Heart left ventricle (tissue), 16 donors: ENCODE measurements at regions of chr1 and their contacts with region 1.

Region 1: DNA sequence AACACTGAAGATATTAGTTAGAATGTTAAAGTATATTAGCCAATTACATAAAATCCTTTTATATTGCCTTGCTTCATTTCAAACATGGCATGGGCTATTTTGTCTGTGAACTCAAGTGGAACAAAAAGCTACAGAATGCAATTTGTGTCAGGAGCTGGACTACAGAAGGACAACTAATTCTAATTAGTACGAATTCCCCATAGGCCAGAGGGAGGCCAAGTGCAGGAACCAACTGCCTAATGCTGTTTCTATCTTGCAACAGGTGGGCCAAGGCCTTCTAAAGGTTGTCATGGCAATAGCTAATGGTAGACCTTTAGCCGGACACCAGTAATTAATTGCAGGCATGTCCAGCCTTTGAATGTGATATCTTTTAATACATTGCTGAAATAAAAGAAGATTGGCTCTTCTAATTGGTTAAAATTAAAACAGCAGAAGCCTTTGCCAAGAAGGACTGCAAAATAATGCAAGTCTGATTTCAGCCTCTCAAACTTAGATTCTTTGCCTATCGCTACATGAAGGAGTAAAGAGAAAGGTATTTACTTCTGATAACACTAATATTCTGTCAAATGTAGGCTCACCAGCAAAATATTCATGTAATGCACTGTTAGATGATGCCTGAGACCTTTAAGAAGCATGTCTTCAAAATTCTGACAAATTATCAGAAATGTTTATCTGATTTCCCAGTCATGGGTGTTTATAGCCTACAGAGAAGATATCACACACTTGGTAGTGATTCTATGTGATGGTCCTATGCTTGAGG is 232.1 kb downstream of the LMO4 start:
- DNase-seq: no peak
- ATAC-seq: no peak
- H3K4me3 ChIP-seq: no peak overlapping the region
- H3K27ac ChIP-seq: no peak overlapping the region
- H3K4me1 ChIP-seq: no peaks in the 10 kb centered on the region
- H3K27me3 ChIP-seq: no peaks in the 10 kb centered on the region
- CTCF ChIP-seq: no peak
- POLR2A ChIP-seq: no peak

Region 2: GRCh38 chr1:87392248-87393192 is 168.3 kb before region 1 on chr1:
- intact Hi-C with region 1: loop called in 1 of 10 experiments (anchors 10 kb)
- DNase-seq: peak in 1 of 5 donors; percentile 21
- ATAC-seq: peak in 1 of 4 donors; percentile 59
- H3K4me3 ChIP-seq: no peak overlapping the region
- H3K27ac ChIP-seq: no peak overlapping the region
- H3K4me1 ChIP-seq: peaks cover 0 to 10% (median 2%) of the 10 kb centered on the region in 12 donors
- H3K27me3 ChIP-seq: no peaks in the 10 kb centered on the region
- CTCF ChIP-seq: no peak
- POLR2A ChIP-seq: no peak

Region 3: DNA sequence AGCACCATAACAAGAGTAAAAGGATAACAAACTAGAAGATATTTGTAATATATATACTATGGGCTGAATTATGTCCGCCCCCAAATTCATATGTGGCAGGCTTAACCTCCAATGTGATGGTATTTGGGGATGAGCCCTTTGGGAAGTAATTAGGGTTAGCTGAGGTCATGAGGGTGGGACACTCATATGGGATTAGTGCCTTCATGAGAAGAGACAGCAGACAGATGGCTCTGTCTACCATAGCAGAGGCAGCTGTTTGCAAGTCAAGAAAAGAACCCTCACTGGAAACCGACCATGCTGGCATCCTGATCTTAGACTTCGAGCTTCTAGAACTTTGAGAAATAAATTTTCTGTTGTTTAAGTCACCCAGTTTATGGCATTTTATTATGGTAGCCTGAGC is 71.5 kb after region 1 on chr1:
- intact Hi-C with region 1: loop called in 1 of 10 experiments (anchors 5 kb)
- DNase-seq: no peak
- ATAC-seq: no peak
- H3K4me3 ChIP-seq: no peak overlapping the region
- H3K27ac ChIP-seq: no peak overlapping the region
- H3K4me1 ChIP-seq: no peaks in the 10 kb centered on the region
- H3K27me3 ChIP-seq: no peaks in the 10 kb centered on the region
- CTCF ChIP-seq: no peak
- POLR2A ChIP-seq: no peak